HepG2 (cell line): ENCODE measurements at regions of chr6 and their contacts with region 1.

Region 1: GRCh38 chr6:24666641-24667377 is at the starts of genes ACOT13 and TDP2:
- DNase-seq: peak; percentile 98
- ATAC-seq: peak; percentile 95
- H3K4me3 ChIP-seq: peak within 1 kb of the TSS; percentile 82 to 95 (median 83)
- H3K27ac ChIP-seq: peak within 1 kb of the TSS; percentile 95
- H3K4me1 ChIP-seq: peaks cover 57% of the 10 kb centered on the region
- H3K27me3 ChIP-seq: no peaks in the 10 kb centered on the region; a peak in 1 of 5 replicates
- CTCF ChIP-seq: peak; percentile 76
- EP300 ChIP-seq: peak; percentile 67
- POLR2A ChIP-seq: peak; percentile 76 to 86
- RAD21 ChIP-seq: peak; percentile 90
- total RNA-seq, gene ACOT13: 31.5 and 50.9 TPM in 2 replicates
- total RNA-seq, gene TDP2: 42.6 and 73.1 TPM in 2 replicates

Region 2: GRCh38 chr6:24494821-24495795 is 171.7 kb before region 1 on chr6 and contains the start of gene ALDH5A1:
- CTCF ChIA-PET with region 1: no interaction called
- POLR2A ChIA-PET with region 1: interaction called, 9 read pairs
- in situ Hi-C with region 1: no loop called
- intact Hi-C with region 1: loop called (anchors 5 kb)
- DNase-seq: peak; percentile 84
- ATAC-seq: peak; percentile 86
- H3K4me3 ChIP-seq: peak within 1 kb of the TSS; percentile 78 to 92 (median 82)
- H3K27ac ChIP-seq: peak within 1 kb of the TSS; percentile 86
- H3K4me1 ChIP-seq: peaks cover 36% of the 10 kb centered on the region
- H3K27me3 ChIP-seq: no peaks in the 10 kb centered on the region
- CTCF ChIP-seq: peak; percentile 83
- EP300 ChIP-seq: no peak
- POLR2A ChIP-seq: peak; percentile 80 to 87
- RAD21 ChIP-seq: peak; percentile 79
- total RNA-seq, gene ALDH5A1: 27.6 and 32.5 TPM in 2 replicates

Region 3: GRCh38 chr6:24646782-24647181 is 20.0 kb before region 1 on chr6:
- CTCF ChIA-PET with region 1: no interaction called
- POLR2A ChIA-PET with region 1: interaction called, 10 read pairs
- in situ Hi-C with region 1: no loop called
- intact Hi-C with region 1: loop called (anchors 1 kb)
- DNase-seq: no peak
- ATAC-seq: no peak
- H3K4me3 ChIP-seq: peak overlapping the region in 1 of 3 experiments; percentile 89; a peak in 1 of 6 replicates
- H3K27ac ChIP-seq: no peak overlapping the region
- H3K4me1 ChIP-seq: peaks cover 29% of the 10 kb centered on the region
- H3K27me3 ChIP-seq: 0 out of 5 replicates have a peak, but pooled peaks cover 0 to 6% of the 10 kb centered on the region in 2 experiments
- CTCF ChIP-seq: no peak
- EP300 ChIP-seq: no peak
- POLR2A ChIP-seq: no peak
- RAD21 ChIP-seq: no peak

Region 4: GRCh38 chr6:24683297-24684296 is 16.8 kb after region 1 on chr6:
- CTCF ChIA-PET with region 1: no interaction called
- POLR2A ChIA-PET with region 1: interaction called, 12 read pairs
- in situ Hi-C with region 1: no loop called
- intact Hi-C with region 1: no loop called
- DNase-seq: no peak
- ATAC-seq: no peak
- H3K4me3 ChIP-seq: no peak overlapping the region
- H3K27ac ChIP-seq: no peak overlapping the region
- H3K4me1 ChIP-seq: peaks cover 21% of the 10 kb centered on the region
- H3K27me3 ChIP-seq: no peaks in the 10 kb centered on the region
- CTCF ChIP-seq: no peak
- EP300 ChIP-seq: no peak
- POLR2A ChIP-seq: no peak
- RAD21 ChIP-seq: no peak

Region 5: DNA sequence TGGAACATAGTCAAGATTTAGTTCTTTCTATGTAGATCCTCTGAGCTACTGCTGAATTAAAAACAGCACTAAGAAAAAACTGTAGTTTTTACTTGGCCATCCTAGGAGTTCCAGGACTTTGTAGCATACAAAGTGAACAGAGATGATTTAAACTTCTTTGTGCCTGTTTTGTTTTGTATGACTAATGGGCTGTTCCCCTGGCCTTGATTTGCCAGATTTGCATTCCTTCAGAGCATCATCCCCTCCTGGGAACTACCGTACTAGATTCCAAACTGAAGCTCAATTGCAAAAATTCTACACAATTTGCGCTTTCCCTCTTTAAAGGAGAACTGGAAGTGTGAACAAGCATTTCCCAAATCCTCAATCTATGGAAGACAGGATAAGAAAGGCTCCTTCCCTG is 23.2 kb after region 1 on chr6:
- CTCF ChIA-PET with region 1: no interaction called
- POLR2A ChIA-PET with region 1: interaction called, 3 read pairs
- in situ Hi-C with region 1: no loop called
- intact Hi-C with region 1: loop called (anchors 1 kb)
- DNase-seq: no peak
- ATAC-seq: no peak
- H3K4me3 ChIP-seq: no peak overlapping the region
- H3K27ac ChIP-seq: no peak overlapping the region
- H3K4me1 ChIP-seq: peaks cover 5% of the 10 kb centered on the region; the same call in 1 of the 2 replicates
- H3K27me3 ChIP-seq: no peaks in the 10 kb centered on the region
- CTCF ChIP-seq: no peak
- EP300 ChIP-seq: no peak
- POLR2A ChIP-seq: no peak
- RAD21 ChIP-seq: no peak

Region 6: GRCh38 chr6:24720604-24721460 is 54.0 kb after region 1 on chr6:
- CTCF ChIA-PET with region 1: no interaction called
- POLR2A ChIA-PET with region 1: interaction called, 22 read pairs
- in situ Hi-C with region 1: no loop called
- intact Hi-C with region 1: loop called (anchors 2 kb)
- DNase-seq: peak; percentile 100
- ATAC-seq: peak; percentile 96
- H3K4me3 ChIP-seq: peak overlapping the region; percentile 90 to 99 (median 97)
- H3K27ac ChIP-seq: peak overlapping the region; percentile 94
- H3K4me1 ChIP-seq: peaks cover 34% of the 10 kb centered on the region
- H3K27me3 ChIP-seq: no peaks in the 10 kb centered on the region; a peak in 1 of 5 replicates
- CTCF ChIP-seq: peak; percentile 30
- EP300 ChIP-seq: peak; percentile 34 to 59; a peak in 3 of 4 replicates
- POLR2A ChIP-seq: peak; percentile 98
- RAD21 ChIP-seq: peak; percentile 52

Region 7: GRCh38 chr6:25435416-25435985 is 768.7 kb after region 1 on chr6:
- CTCF ChIA-PET with region 1: no interaction called
- POLR2A ChIA-PET with region 1: no interaction called
- in situ Hi-C with region 1: no loop called
- intact Hi-C with region 1: no loop called
- DNase-seq: no peak
- ATAC-seq: no peak
- H3K4me3 ChIP-seq: no peak overlapping the region
- H3K27ac ChIP-seq: no peak overlapping the region
- H3K4me1 ChIP-seq: no peaks in the 10 kb centered on the region
- H3K27me3 ChIP-seq: no peaks in the 10 kb centered on the region
- CTCF ChIP-seq: no peak
- EP300 ChIP-seq: no peak
- POLR2A ChIP-seq: no peak
- RAD21 ChIP-seq: no peak